A673 (cell line): ENCODE measurements at regions of chr1 and their contacts with region 1.

Region 1: GRCh38 chr1:151494741-151495281 is 16.4 kb upstream of the CGN start:
- DNase-seq: peak; percentile 82
- H3K4me3 ChIP-seq: no peak overlapping the region
- H3K27ac ChIP-seq: no peak overlapping the region
- H3K4me1 ChIP-seq: peaks cover 19% of the 10 kb centered on the region
- H3K27me3 ChIP-seq: no peaks in the 10 kb centered on the region
- CTCF ChIP-seq: no peak

Region 2: DNA sequence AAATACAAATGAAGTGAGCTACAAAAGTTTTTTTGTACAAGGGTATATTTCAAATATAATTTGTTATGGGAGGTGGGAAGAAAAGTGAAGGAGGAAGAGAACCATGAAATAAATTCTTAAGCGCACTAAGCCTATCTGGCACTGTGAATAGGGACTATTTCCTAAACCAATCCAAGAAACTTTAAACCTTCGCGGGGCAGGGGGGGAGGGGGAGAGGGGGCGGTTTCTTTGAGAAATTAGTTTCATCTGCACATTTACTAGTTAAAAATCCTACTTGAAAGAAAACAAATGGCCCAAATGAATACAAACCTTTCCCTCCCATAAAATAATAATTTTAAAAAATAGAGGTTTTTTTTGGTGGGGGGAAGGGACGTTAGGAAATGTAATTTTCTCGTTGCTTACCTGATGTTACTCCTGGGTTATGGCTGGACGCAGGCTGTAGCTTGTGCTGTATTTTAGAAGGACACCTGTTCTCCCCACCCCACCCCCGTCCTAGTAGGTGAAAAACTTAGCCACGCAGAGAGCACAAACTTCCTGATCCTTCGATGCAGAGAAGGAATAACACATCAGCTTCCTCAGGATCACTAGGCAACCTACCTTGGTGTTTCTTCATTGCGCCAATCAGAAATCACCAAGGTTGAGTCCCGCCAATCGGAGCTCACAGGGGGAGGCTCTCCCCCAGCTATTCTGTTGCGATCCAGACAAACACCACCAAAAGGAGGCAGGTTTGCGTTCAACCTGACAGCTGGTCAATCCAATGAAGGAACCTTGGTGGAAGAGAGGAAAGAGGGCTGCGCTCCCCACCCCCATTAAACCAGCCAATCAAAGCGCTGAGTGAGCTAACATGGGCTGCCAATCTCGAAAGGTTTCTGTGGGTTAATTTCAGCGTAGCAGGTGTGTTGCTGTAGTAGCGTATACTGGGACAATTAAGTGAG is 798.0 kb before region 1 on chr1 and contains the start of gene GOLPH3L:
- CTCF ChIA-PET with region 1: interaction called, 11 read pairs
- POLR2A ChIA-PET with region 1: no interaction called
- intact Hi-C with region 1: no loop called
- DNase-seq: peak; percentile 99
- H3K4me3 ChIP-seq: peak within 1 kb of the TSS; percentile 67
- H3K27ac ChIP-seq: no peak within 1 kb of the TSS
- H3K4me1 ChIP-seq: peaks cover 12% of the 10 kb centered on the region
- H3K27me3 ChIP-seq: no peaks in the 10 kb centered on the region
- CTCF ChIP-seq: no peak
- total RNA-seq, gene GOLPH3L: 22.6 and 26.7 TPM in 2 replicates